Naive thymus-derived CD4-positive, alpha-beta T cell (primary cell): ENCODE measurements at regions of chr9 and their contacts with region 1.

Region 1: GRCh38 chr9:84170521-84171141 is 169.9 kb downstream of the SLC28A3 start:
- DNase-seq: no peak
- ATAC-seq: no peak
- H3K4me3 ChIP-seq: no peak overlapping the region
- H3K4me3 Mint-ChIP-seq: no peak overlapping the region
- H3K27ac ChIP-seq: no peak overlapping the region
- H3K27ac Mint-ChIP-seq: no peak overlapping the region
- H3K4me1 ChIP-seq: no peaks in the 10 kb centered on the region
- H3K4me1 Mint-ChIP-seq: peaks cover 0 to 5% (median 0%) of the 10 kb centered on the region in 7 donors
- H3K27me3 ChIP-seq: no peaks in the 10 kb centered on the region
- H3K27me3 Mint-ChIP-seq: peaks cover 0 to 8% (median 5%) of the 10 kb centered on the region in 5 donors

Region 2: GRCh38 chr9:83794051-83794450 is 376.6 kb before region 1 on chr9:
- CTCF ChIA-PET with region 1: no interaction called
- POLR2A ChIA-PET with region 1: no interaction called
- intact Hi-C with region 1: loop called in 1 of 2 experiments (anchors 2 kb)
- DNase-seq: no peak
- ATAC-seq: no peak
- H3K4me3 ChIP-seq: no peak overlapping the region
- H3K4me3 Mint-ChIP-seq: no peak overlapping the region
- H3K27ac ChIP-seq: no peak overlapping the region
- H3K27ac Mint-ChIP-seq: peak overlapping the region in 1 of 9 donors; percentile 52
- H3K4me1 ChIP-seq: no peaks in the 10 kb centered on the region
- H3K4me1 Mint-ChIP-seq: peaks cover 0 to 7% (median 0%) of the 10 kb centered on the region in 7 donors
- H3K27me3 ChIP-seq: no peaks in the 10 kb centered on the region
- H3K27me3 Mint-ChIP-seq: no peaks in the 10 kb centered on the region

Region 3: GRCh38 chr9:83937911-83938323 is 232.7 kb before region 1 on chr9:
- CTCF ChIA-PET with region 1: interaction called, 8 read pairs
- POLR2A ChIA-PET with region 1: no interaction called
- intact Hi-C with region 1: loop called (anchors 1 kb)
- DNase-seq: peak in 7 of 9 donors; percentile 44 to 74 (median 66)
- ATAC-seq: peak; percentile 84
- H3K4me3 ChIP-seq: no peak overlapping the region
- H3K4me3 Mint-ChIP-seq: no peak overlapping the region
- H3K27ac ChIP-seq: no peak overlapping the region
- H3K27ac Mint-ChIP-seq: no peak overlapping the region
- H3K4me1 ChIP-seq: no peaks in the 10 kb centered on the region
- H3K4me1 Mint-ChIP-seq: peaks cover 0 to 19% (median 0%) of the 10 kb centered on the region in 7 donors
- H3K27me3 ChIP-seq: no peaks in the 10 kb centered on the region
- H3K27me3 Mint-ChIP-seq: no peaks in the 10 kb centered on the region

Region 4: DNA sequence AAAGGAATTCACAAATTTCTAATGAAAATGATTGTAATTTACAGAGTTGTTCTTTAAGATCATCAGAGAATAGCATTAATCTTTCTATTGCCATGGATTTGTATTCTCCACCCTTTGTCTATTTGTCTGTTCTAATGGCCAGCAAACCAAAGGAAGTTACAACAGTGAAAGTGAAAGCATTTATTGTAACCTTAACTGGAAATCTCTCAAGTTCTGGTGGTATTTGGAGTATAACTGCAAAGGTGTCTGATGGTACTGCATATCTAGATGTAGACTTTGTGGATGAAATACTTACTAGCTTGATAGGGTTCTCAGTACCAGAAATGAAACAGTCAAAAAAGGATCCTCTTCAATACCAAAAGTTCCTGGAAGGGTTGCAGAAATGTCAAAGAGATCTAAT is 168.3 kb before region 1 on chr9:
- CTCF ChIA-PET with region 1: no interaction called
- POLR2A ChIA-PET with region 1: no interaction called
- intact Hi-C with region 1: loop called in 1 of 2 experiments (anchors 10 kb)
- DNase-seq: peak in 5 of 9 donors; percentile 0 to 20 (median 10)
- ATAC-seq: peak; percentile 40
- H3K4me3 ChIP-seq: no peak overlapping the region
- H3K4me3 Mint-ChIP-seq: peak overlapping the region in 3 of 10 donors; percentile 4 to 58 (median 16)
- H3K27ac ChIP-seq: no peak overlapping the region
- H3K27ac Mint-ChIP-seq: peak overlapping the region in 5 of 9 donors; percentile 3 to 59 (median 34)
- H3K4me1 ChIP-seq: no peaks in the 10 kb centered on the region
- H3K4me1 Mint-ChIP-seq: peaks cover 9 to 27% (median 13%) of the 10 kb centered on the region in 7 donors
- H3K27me3 ChIP-seq: no peaks in the 10 kb centered on the region
- H3K27me3 Mint-ChIP-seq: no peaks in the 10 kb centered on the region